Transverse colon (tissue), 4 donors: ENCODE measurements at regions of chr11 and their contacts with region 1.

Region 1: DNA sequence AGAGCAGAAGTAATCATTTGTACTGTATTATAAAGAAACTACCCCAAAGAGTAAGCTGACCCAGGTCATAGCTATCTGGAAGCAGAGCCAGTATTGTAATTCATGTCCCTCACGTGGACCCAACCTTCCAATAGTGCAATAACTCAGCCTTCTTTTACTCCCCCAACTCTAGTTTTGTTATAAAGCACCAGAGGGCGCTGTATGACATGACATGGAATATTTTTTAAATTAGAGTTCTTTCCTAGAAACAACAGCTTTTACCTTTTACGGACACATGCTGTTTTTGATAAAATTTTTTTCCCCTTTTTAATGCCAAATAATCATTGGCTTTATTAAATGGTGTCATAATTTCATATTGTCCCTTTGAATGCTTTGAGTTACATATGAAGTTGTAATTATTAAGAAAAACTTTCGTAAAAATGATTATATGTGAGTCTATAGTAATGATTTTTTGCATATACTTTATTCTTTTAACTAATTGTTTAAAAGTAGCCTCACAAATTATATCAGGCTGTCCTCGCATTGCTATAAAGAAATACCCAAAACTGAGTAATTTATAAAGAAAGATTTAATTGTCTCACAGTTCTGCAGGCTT is 76.9 kb downstream of the DKK3 start:
- DNase-seq: no peak
- H3K4me3 ChIP-seq: no peak overlapping the region
- H3K27ac ChIP-seq: no peak overlapping the region
- H3K4me1 ChIP-seq: no peaks in the 10 kb centered on the region
- H3K27me3 ChIP-seq: no peaks in the 10 kb centered on the region
- CTCF ChIP-seq: peak; percentile 50 to 64 (median 56)
- EP300 ChIP-seq: no peak
- POLR2A ChIP-seq: no peak

Region 2: GRCh38 chr11:11841723-11842420 is 89.7 kb before region 1 on chr11 and contains the start of gene USP47:
- in situ Hi-C with region 1: no loop called
- intact Hi-C with region 1: no loop called
- DNase-seq: peak; percentile 93
- H3K4me3 ChIP-seq: peak within 1 kb of the TSS; percentile 53 to 87 (median 84)
- H3K27ac ChIP-seq: peak within 1 kb of the TSS; percentile 94 to 99 (median 98)
- H3K4me1 ChIP-seq: peaks cover 15 to 45% (median 37%) of the 10 kb centered on the region in 4 donors
- H3K27me3 ChIP-seq: no peaks in the 10 kb centered on the region
- CTCF ChIP-seq: peak in 4 of 5 experiments; percentile 58 to 86 (median 66)
- EP300 ChIP-seq: no peak
- POLR2A ChIP-seq: peak; percentile 85
- total RNA-seq, gene USP47: 42.6 to 85.1 (median 57.3) TPM

Region 3: GRCh38 chr11:12029738-12030363 is 98.3 kb after region 1 on chr11:
- in situ Hi-C with region 1: loop called in 2 of 4 experiments (anchors 10 to 25 kb)
- intact Hi-C with region 1: no loop called
- DNase-seq: no peak
- H3K4me3 ChIP-seq: no peak overlapping the region
- H3K27ac ChIP-seq: no peak overlapping the region
- H3K4me1 ChIP-seq: no peaks in the 10 kb centered on the region
- H3K27me3 ChIP-seq: peaks cover 3% of the 10 kb centered on the region
- CTCF ChIP-seq: no peak
- EP300 ChIP-seq: no peak
- POLR2A ChIP-seq: no peak

Region 4: DNA sequence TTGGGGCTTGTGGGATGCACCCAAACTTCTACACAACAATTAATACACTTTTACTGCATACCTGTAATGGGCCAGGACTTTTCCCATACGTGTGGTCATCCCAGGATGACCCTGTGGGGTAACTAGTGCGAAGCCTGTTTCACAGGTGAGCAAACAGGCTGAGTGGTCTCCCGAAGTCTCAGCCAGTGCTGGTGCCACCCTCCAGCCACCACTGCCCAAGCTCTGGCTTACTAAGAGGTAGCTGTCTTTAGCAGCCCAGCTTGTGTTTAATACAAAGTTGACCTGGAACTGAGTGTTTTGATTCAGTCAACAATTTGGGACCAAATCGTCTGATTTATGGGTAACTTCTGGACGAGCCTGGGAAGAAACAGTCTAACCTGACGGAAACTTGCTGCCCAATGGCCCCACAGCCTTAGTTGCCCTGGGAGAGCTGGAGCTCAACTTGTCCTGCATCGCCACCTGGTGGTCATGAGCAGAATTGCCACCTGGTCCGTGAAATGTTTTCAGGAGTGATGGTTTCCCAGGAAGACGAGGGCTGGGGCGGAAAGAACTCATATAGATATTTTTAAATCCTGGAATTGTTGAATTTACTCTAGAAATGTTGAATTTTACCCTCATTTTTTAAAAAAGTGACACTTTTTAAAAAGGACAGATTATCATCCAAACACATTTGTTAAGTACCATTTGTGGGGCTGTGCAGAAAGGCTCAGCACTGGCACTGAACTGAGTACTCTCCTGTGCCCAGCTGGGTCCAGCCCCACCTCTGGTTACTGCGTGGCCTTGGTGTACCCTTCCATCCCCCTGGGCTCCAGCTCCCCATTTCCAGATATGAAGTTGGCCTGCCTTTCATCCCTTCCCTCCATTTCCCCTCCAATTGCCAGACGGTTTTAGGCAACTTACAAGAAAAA is 350.3 kb after region 1 on chr11:
- in situ Hi-C with region 1: loop called in 2 of 4 experiments (anchors 25 kb)
- intact Hi-C with region 1: no loop called
- DNase-seq: peak; percentile 87
- H3K4me3 ChIP-seq: no peak overlapping the region
- H3K27ac ChIP-seq: no peak overlapping the region
- H3K4me1 ChIP-seq: peaks cover 0 to 30% (median 5%) of the 10 kb centered on the region in 4 donors
- H3K27me3 ChIP-seq: no peaks in the 10 kb centered on the region
- CTCF ChIP-seq: peak; percentile 94 to 99 (median 97)
- EP300 ChIP-seq: no peak
- POLR2A ChIP-seq: no peak

Region 5: DNA sequence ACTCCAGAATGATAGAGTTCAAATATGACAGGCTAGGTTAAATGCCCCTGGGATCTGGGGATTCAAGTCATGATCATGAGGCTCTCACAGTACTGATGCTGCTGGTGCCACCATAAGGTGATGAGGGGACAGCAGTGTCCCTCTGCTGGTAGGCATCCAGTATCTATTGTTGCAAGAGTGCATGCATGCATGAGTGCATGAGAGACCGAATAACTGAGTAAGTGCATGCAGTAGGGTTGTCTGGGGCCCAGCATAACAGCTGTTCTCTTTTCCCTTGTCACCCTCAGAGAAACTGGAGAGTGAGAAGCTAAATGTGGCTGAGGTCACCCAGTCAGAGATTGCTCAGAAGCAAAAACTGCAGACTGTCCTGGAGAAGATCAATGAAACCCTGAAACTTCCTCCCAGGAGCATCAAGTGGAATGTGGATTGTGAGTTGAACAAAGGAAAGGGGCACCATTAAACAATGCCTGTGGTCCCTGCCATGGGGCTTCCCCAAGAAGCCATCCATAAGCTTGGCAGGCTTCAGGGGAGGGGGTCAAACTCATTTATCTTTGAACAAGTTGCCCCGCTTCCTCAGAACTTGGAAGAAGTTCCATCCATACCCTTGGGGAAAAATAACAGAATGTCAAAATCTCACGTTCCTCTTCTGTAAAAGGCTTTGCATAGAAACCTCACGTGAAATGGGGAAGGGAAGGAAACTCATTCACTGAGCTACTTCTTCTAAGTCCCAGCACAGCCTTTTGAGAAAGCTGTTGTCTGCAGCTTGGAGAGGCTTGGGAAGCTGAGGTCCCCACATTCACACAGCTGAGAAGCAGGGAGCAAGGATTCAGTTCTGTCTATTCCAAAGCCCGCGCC is 564.8 kb after region 1 on chr11:
- in situ Hi-C with region 1: no loop called
- intact Hi-C with region 1: no loop called
- DNase-seq: no peak
- H3K4me3 ChIP-seq: no peak overlapping the region
- H3K27ac ChIP-seq: no peak overlapping the region
- H3K4me1 ChIP-seq: no peaks in the 10 kb centered on the region
- H3K27me3 ChIP-seq: no peaks in the 10 kb centered on the region
- CTCF ChIP-seq: no peak
- EP300 ChIP-seq: no peak
- POLR2A ChIP-seq: no peak